Lower lobe of right lung (tissue), 2 donors: ENCODE measurements at regions of chr3 and their contacts with region 1.

Region 1: GRCh38 chr3:21752749-21753347 is 1.8 kb upstream of the ZNF385D start:
- DNase-seq: no peak
- ATAC-seq: peak in 1 of 2 donors; percentile 59
- H3K4me3 ChIP-seq: no peak overlapping the region
- H3K27ac ChIP-seq: no peak overlapping the region
- H3K4me1 ChIP-seq: peaks cover 10% of the 10 kb centered on the region
- H3K27me3 ChIP-seq: peaks cover 9% of the 10 kb centered on the region
- CTCF ChIP-seq: peak; percentile 65

Region 2: GRCh38 chr3:21894459-21895340 is 141.9 kb after region 1 on chr3:
- intact Hi-C with region 1: loop called (anchors 5 kb)
- DNase-seq: no peak
- ATAC-seq: no peak
- H3K4me3 ChIP-seq: no peak overlapping the region
- H3K27ac ChIP-seq: no peak overlapping the region
- H3K4me1 ChIP-seq: no peaks in the 10 kb centered on the region
- H3K27me3 ChIP-seq: no peaks in the 10 kb centered on the region
- CTCF ChIP-seq: peak; percentile 61